ENCODE measurements at regions of chr14 and their contacts with region 1.

Region 1: GRCh38 chr14:21068521-21069387 is 1.4 kb upstream of the ARHGEF40 start:
- DNase-seq: no peak
- H3K4me3 Mint-ChIP-seq: peak overlapping the region; percentile 64
- H3K27ac Mint-ChIP-seq: no peak overlapping the region
- H3K4me1 Mint-ChIP-seq: peaks cover 30% of the 10 kb centered on the region
- H3K27me3 Mint-ChIP-seq: peaks cover 78% of the 10 kb centered on the region

Region 2: GRCh38 chr14:21092273-21093011 is 23.7 kb after region 1 on chr14:
- intact Hi-C with region 1: loop called (anchors 1 kb)
- DNase-seq: peak; percentile 83
- H3K4me3 Mint-ChIP-seq: no peak overlapping the region
- H3K27ac Mint-ChIP-seq: no peak overlapping the region
- H3K4me1 Mint-ChIP-seq: peaks cover 11% of the 10 kb centered on the region
- H3K27me3 Mint-ChIP-seq: peaks cover 11% of the 10 kb centered on the region

Region 3: DNA sequence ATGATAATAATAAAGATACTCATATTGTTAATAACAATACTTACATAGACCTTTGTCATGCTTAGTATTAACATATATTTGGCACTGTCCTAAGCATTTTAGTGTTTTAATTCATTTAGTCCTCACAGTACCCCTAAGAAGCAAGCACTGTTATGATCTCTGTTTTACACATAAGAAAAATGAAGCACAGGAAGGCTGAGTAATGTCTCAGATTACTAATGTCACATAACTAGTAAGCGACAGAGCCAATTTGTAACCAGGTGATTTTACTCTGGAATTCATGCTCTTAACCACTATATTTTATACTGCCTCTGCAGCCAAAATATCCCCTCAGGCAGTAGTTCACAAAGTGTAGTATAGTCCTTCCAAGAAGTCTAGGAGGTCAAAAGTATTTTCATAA is 52.4 kb after region 1 on chr14:
- intact Hi-C with region 1: no loop called
- DNase-seq: no peak
- H3K4me3 Mint-ChIP-seq: no peak overlapping the region
- H3K27ac Mint-ChIP-seq: no peak overlapping the region
- H3K4me1 Mint-ChIP-seq: peaks cover 4% of the 10 kb centered on the region
- H3K27me3 Mint-ChIP-seq: peaks cover under 1% of the 10 kb centered on the region

Region 4: DNA sequence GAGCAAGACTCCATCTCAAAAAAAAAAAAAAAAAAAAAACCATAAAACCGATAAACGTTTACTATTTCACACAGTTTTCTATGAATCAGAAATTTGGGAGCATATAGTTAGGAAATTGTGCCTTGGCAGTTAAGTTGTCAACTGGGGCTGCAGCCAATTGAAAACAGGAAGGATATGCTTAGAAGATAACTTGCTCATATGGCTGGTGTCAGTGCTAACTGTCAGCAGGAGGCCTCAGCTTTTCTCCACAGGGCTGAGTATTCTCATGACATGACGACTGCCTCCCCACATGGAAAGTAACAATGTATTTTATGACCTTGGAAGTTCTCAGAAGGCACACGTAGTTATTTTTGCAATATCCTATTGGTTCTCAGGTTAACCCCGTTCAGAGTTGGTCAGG is 116.7 kb after region 1 on chr14:
- intact Hi-C with region 1: no loop called
- DNase-seq: no peak
- H3K4me3 Mint-ChIP-seq: no peak overlapping the region
- H3K27ac Mint-ChIP-seq: no peak overlapping the region
- H3K4me1 Mint-ChIP-seq: peaks cover 3% of the 10 kb centered on the region
- H3K27me3 Mint-ChIP-seq: peaks cover 14% of the 10 kb centered on the region